ENCODE measurements at regions of chr2 and their contacts with region 1.

Region 1: DNA sequence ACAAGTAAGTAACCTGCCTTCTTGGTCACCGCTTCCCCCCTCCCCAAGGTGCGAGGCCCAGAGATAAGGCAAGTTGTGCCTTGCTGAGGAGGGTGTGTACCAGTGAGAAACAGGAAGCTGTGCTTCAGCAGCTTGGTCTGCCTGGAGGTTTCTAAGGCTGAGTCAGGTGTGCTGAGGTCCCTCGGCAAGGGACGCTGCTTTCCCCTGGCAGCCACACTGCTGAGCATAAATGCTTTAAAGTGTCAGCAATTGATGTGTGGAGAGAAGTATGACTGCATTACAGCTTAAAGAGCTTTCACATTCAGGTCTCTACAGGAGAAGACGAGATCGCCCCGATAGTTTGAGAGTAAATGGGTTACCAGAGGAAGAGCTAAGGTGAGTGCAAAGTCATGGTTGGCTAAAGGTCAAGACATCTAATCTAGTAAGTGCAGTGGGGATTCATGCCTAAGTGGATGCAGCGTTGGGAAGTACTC is 86.9 kb downstream of the LIMS1 start:
- DNase-seq: peak; percentile 38 to 87 (median 76)
- ATAC-seq: peak; percentile 93
- H3K4me3 ChIP-seq: peak overlapping the region; percentile 27 to 47
- H3K4me3 Mint-ChIP-seq: peak overlapping the region; percentile 85
- H3K27ac ChIP-seq: peak overlapping the region; percentile 44 to 79
- H3K27ac Mint-ChIP-seq: peak overlapping the region; percentile 95
- H3K4me1 ChIP-seq: peaks cover 55% of the 10 kb centered on the region
- H3K4me1 Mint-ChIP-seq: peaks cover 83% of the 10 kb centered on the region
- H3K27me3 ChIP-seq: no peaks in the 10 kb centered on the region
- H3K27me3 Mint-ChIP-seq: no peaks in the 10 kb centered on the region
- CTCF ChIP-seq: no peak

Region 2: DNA sequence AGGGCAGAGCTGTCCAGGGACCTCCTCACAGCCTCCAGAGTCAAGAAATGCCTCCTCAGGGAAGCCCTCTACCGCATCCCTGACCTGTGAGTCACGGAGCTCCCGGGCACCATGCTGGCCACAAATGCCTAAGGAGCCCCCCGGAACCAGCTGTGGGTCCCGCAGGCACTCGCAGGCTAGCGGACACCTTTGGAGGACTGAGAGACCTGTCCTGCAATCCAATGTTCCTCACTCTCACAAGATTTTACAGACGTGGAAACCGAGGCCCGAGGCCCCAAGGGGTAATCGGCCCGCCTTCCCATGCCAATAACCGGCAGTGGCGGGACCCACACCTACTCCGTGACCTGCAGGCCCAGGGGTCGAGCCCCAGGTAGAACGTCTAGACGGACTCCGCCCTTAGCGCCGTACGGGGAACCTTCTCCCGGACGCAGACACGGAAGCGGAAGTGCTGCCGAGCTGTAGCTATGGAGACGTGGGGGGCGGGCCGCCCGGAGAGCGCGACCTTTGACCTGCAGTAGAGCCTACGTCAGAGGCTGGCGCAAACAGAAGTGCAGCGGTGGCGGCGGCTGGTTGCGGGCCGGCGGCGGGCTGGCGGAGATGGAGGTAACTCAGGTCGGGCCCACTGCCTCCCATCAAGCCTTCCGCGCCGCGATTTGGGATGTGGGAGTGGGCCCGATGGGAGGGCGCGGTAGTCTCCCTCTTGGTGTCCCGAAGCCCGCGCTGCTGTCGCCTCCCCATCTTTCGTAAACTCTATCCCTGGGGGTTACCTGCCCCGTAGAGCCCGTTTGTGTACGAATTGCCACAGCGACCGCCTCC is 172.2 kb before region 1 on chr2 and contains the start of gene GCC2:
- CTCF ChIA-PET with region 1: no interaction called
- POLR2A ChIA-PET with region 1: interaction called, 3 read pairs
- intact Hi-C with region 1: loop called in 1 of 2 experiments (anchors 2 kb)
- DNase-seq: peak; percentile 94 to 98 (median 97)
- ATAC-seq: peak; percentile 90
- H3K4me3 ChIP-seq: peak within 1 kb of the TSS; percentile 97
- H3K4me3 Mint-ChIP-seq: peak within 1 kb of the TSS; percentile 97
- H3K27ac ChIP-seq: peak within 1 kb of the TSS; percentile 98 to 99
- H3K27ac Mint-ChIP-seq: peak within 1 kb of the TSS; percentile 99
- H3K4me1 ChIP-seq: peaks cover 18% of the 10 kb centered on the region
- H3K4me1 Mint-ChIP-seq: peaks cover 41% of the 10 kb centered on the region
- H3K27me3 ChIP-seq: no peaks in the 10 kb centered on the region
- H3K27me3 Mint-ChIP-seq: no peaks in the 10 kb centered on the region
- CTCF ChIP-seq: no peak
- total RNA-seq, gene GCC2: 147 to 157 TPM

Region 3: GRCh38 chr2:108533832-108534583 is 87.1 kb before region 1 on chr2 and contains the start of gene LIMS1:
- CTCF ChIA-PET with region 1: no interaction called
- POLR2A ChIA-PET with region 1: interaction called, 3 read pairs
- intact Hi-C with region 1: loop called (anchors 1 to 5 kb)
- DNase-seq: peak; percentile 67 to 90 (median 88)
- ATAC-seq: peak; percentile 95
- H3K4me3 ChIP-seq: peak within 1 kb of the TSS; percentile 76 to 88
- H3K4me3 Mint-ChIP-seq: peak within 1 kb of the TSS; percentile 98
- H3K27ac ChIP-seq: peak within 1 kb of the TSS; percentile 42 to 59
- H3K27ac Mint-ChIP-seq: peak within 1 kb of the TSS; percentile 88
- H3K4me1 ChIP-seq: peaks cover 7% of the 10 kb centered on the region
- H3K4me1 Mint-ChIP-seq: peaks cover 23% of the 10 kb centered on the region
- H3K27me3 ChIP-seq: no peaks in the 10 kb centered on the region
- H3K27me3 Mint-ChIP-seq: no peaks in the 10 kb centered on the region
- CTCF ChIP-seq: no peak
- total RNA-seq, gene LIMS1: 10.1 to 10.6 TPM

Region 4: DNA sequence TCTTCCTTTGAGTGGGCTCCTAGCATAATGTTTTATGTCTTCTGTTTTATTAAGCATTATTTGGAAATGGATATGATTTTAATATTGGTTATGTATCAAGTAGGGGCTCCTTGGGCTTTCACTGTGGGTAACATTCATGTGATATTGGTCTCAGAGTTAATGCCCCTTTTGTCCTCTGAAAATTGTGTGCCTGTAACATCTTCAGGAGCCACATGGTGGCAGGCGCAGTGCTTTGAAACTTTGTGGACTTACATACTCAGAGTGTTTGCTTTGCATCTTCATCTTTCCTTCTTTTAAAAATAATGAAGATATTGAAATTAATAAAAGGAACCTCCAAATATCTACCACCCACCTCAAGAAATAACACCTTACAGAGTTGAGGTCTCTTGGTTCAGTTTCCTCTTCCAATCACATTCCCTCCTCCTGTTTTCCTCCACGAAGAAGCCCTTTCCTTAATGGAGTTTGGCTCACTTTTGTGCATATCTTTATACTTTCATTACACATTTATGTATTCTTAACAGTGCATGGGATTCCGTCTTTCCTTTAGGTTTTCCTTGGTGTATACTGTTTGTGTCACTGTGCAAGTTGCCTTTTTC is 13.3 kb before region 1 on chr2:
- CTCF ChIA-PET with region 1: interaction called, 6 read pairs
- POLR2A ChIA-PET with region 1: interaction called, 10 read pairs
- intact Hi-C with region 1: loop called in 1 of 2 experiments (anchors 1 kb)
- DNase-seq: peak in 7 of 9 experiments; percentile 23 to 65 (median 48)
- ATAC-seq: peak; percentile 50
- H3K4me3 ChIP-seq: no peak overlapping the region
- H3K4me3 Mint-ChIP-seq: no peak overlapping the region
- H3K27ac ChIP-seq: no peak overlapping the region
- H3K27ac Mint-ChIP-seq: no peak overlapping the region
- H3K4me1 ChIP-seq: peaks cover 5% of the 10 kb centered on the region
- H3K4me1 Mint-ChIP-seq: peaks cover 29% of the 10 kb centered on the region
- H3K27me3 ChIP-seq: no peaks in the 10 kb centered on the region
- H3K27me3 Mint-ChIP-seq: no peaks in the 10 kb centered on the region
- CTCF ChIP-seq: peak; percentile 72

Region 5: GRCh38 chr2:108637304-108637669 is 16.2 kb after region 1 on chr2:
- CTCF ChIA-PET with region 1: interaction called, 200 read pairs
- POLR2A ChIA-PET with region 1: interaction called, 5 read pairs
- intact Hi-C with region 1: loop called in 1 of 2 experiments (anchors 1 kb)
- DNase-seq: peak in 1 of 9 experiments; percentile 34
- ATAC-seq: no peak
- H3K4me3 ChIP-seq: no peak overlapping the region
- H3K4me3 Mint-ChIP-seq: no peak overlapping the region
- H3K27ac ChIP-seq: no peak overlapping the region
- H3K27ac Mint-ChIP-seq: no peak overlapping the region
- H3K4me1 ChIP-seq: no peaks in the 10 kb centered on the region
- H3K4me1 Mint-ChIP-seq: peaks cover 25% of the 10 kb centered on the region
- H3K27me3 ChIP-seq: no peaks in the 10 kb centered on the region
- H3K27me3 Mint-ChIP-seq: no peaks in the 10 kb centered on the region
- CTCF ChIP-seq: no peak

Region 6: DNA sequence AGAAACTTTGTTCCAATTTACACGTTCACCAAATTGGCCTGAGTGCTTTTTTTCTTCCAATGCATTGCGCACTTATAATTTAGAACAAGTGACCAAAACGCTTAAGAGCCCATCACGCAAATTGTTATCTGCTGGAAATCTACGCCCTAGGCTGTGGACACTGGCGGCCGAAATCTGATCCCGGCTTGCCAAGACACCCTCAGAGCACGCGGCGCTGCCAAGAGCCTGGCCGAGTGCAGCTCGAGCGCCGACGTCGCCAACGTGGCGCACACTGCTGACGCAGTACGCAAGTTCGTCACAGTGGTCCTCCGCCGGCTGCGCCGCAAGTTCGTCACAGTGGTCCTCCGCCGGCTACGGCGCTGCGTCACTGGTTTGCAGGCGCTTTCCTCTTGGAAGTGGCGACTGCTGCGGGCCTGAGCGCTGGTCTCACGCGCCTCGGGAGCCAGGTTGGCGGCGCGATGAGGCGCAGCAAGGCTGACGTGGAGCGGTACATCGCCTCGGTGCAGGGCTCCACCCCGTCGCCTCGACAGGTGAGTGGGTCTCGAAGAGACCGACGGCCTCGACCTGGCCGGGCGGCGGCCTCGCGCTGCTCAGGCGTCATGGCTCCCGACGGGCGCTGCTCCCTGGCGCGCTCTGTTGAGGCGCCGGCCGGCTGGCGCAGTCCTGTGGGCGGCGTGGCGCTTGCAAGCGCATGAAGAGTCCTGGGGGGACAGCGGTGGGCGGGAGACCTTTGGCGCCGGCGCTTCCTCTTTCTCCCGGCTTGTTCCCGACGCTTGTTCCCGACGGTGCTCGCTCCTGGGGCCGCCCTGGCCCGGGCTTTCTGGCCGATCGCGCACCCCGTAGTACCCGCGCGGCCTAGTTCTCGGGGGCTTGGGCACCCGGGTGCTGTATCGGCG is 98.3 kb after region 1 on chr2 and contains the start of gene RANBP2:
- CTCF ChIA-PET with region 1: no interaction called
- POLR2A ChIA-PET with region 1: interaction called, 3 read pairs
- intact Hi-C with region 1: loop called in 1 of 2 experiments (anchors 2 kb)
- DNase-seq: peak; percentile 87 to 99 (median 94)
- ATAC-seq: peak; percentile 87
- H3K4me3 ChIP-seq: peak within 1 kb of the TSS; percentile 47 to 57
- H3K4me3 Mint-ChIP-seq: peak within 1 kb of the TSS; percentile 94
- H3K27ac ChIP-seq: peak within 1 kb of the TSS; percentile 91
- H3K27ac Mint-ChIP-seq: peak within 1 kb of the TSS; percentile 99
- H3K4me1 ChIP-seq: peaks cover 16% of the 10 kb centered on the region
- H3K4me1 Mint-ChIP-seq: peaks cover 24% of the 10 kb centered on the region
- H3K27me3 ChIP-seq: no peaks in the 10 kb centered on the region
- H3K27me3 Mint-ChIP-seq: no peaks in the 10 kb centered on the region
- CTCF ChIP-seq: no peak
- total RNA-seq, gene RANBP2: 238 to 240 TPM

Region 7: GRCh38 chr2:108786354-108787199 is 165.5 kb after region 1 on chr2 and contains the start of gene CCDC138:
- CTCF ChIA-PET with region 1: no interaction called
- POLR2A ChIA-PET with region 1: no interaction called
- intact Hi-C with region 1: loop called in 1 of 2 experiments (anchors 10 kb)
- DNase-seq: peak; percentile 85 to 95 (median 93)
- ATAC-seq: peak; percentile 97
- H3K4me3 ChIP-seq: peak within 1 kb of the TSS; percentile 76 to 90
- H3K4me3 Mint-ChIP-seq: peak within 1 kb of the TSS; percentile 99
- H3K27ac ChIP-seq: peak within 1 kb of the TSS; percentile 77 to 83
- H3K27ac Mint-ChIP-seq: peak within 1 kb of the TSS; percentile 97
- H3K4me1 ChIP-seq: peaks cover 10% of the 10 kb centered on the region
- H3K4me1 Mint-ChIP-seq: peaks cover 22% of the 10 kb centered on the region
- H3K27me3 ChIP-seq: no peaks in the 10 kb centered on the region
- H3K27me3 Mint-ChIP-seq: no peaks in the 10 kb centered on the region
- CTCF ChIP-seq: no peak
- total RNA-seq, gene CCDC138: 4.6 to 5.9 TPM

Region 8: DNA sequence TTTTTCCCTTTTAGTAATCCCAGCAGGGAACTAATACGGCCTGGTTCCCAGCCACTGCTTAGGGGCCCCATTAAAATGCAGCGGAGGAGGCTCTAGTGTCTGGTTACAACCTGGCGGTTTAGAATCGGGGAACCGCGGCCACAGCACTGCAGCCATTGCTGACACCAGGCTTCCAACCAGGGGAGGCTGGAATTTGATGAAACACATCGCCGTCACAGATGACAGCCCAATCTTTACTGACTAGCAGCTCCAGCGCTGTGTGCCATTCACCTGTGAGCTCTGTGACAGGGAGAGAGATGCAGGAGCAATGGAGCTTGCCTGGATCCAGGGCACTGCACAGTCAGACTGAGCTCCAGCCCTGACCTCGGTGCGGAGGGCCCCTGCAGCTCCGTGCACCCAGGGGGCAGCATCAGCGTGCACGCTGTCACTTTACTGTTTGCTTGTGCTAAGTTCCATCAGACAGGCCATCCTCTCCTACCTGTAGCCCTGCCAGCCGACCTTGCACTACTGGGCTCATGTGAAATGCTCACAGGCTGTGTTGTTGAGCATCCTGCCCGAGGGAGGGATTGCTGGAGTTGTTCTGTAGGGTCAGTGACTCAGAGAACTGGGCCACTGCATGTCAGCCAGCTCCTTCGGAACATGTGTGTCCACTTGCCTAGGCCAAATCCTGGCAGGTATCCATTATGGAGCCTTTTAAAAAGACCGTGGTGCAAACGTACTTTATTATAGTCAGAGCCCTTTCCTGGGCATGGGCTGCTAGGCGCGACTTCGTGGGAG is 789.1 kb after region 1 on chr2:
- CTCF ChIA-PET with region 1: no interaction called
- POLR2A ChIA-PET with region 1: no interaction called
- intact Hi-C with region 1: no loop called
- DNase-seq: no peak
- ATAC-seq: no peak
- H3K4me3 ChIP-seq: no peak overlapping the region
- H3K4me3 Mint-ChIP-seq: no peak overlapping the region
- H3K27ac ChIP-seq: no peak overlapping the region
- H3K27ac Mint-ChIP-seq: no peak overlapping the region
- H3K4me1 ChIP-seq: no peaks in the 10 kb centered on the region
- H3K4me1 Mint-ChIP-seq: no peaks in the 10 kb centered on the region
- H3K27me3 ChIP-seq: no peaks in the 10 kb centered on the region
- H3K27me3 Mint-ChIP-seq: no peaks in the 10 kb centered on the region
- CTCF ChIP-seq: no peak

Measured in CD8-positive, alpha-beta T cell (primary cell).